B cell (primary cell): ENCODE measurements at regions of chr5 and their contacts with region 1.

Region 1: DNA sequence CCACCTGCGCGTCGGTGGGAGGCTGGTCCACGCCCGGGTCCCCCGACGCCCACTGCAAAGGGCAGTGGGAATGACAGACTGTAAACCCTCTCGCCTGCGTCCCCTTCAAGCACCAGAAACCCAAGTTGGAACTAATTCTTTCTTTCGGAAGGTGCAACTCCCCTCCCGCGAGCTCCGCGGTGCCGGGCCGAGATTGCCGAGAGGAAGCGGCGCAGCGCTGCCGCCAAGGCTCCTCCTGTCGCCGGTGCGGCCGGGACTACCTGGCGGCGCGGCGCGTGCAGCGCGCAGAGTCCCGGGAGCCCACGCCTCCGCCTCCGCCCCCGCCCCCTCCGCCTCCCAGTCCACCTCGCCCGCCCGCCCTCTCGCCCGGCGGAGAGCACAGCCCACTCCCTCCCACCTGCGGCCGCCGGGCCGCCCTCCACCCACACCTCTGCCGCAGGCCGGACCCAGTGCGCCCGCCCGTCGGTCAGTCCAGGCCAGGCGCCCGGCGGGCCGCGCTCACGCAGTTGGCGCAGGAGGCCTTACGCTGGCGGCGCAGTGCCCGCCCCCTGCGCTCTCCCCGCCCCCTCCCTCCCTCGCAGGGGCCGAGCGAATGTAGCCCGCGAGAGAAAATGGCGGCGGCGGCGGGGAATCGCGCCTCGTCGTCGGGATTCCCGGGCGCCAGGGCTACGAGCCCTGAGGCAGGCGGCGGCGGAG is at the start of gene MAP3K1:
- DNase-seq: peak; percentile 93
- ATAC-seq: peak; percentile 65
- H3K4me3 ChIP-seq: peak within 1 kb of the TSS; percentile 73 to 97 (median 87)
- H3K4me3 Mint-ChIP-seq: peak within 1 kb of the TSS; percentile 97
- H3K27ac ChIP-seq: peak within 1 kb of the TSS; percentile 91 to 94
- H3K27ac Mint-ChIP-seq: peak within 1 kb of the TSS; percentile 99
- H3K4me1 ChIP-seq: peaks cover 25 to 29% of the 10 kb centered on the region in 2 donors
- H3K4me1 Mint-ChIP-seq: peaks cover 44% of the 10 kb centered on the region
- H3K27me3 ChIP-seq: no peaks in the 10 kb centered on the region
- H3K27me3 Mint-ChIP-seq: no peaks in the 10 kb centered on the region
- CTCF ChIP-seq: no peak
- total RNA-seq, gene MAP3K1: 160 and 164 TPM in 2 replicates

Region 2: GRCh38 chr5:56565644-56566043 is 249.5 kb before region 1 on chr5:
- CTCF ChIA-PET with region 1: interaction called, 4 read pairs
- POLR2A ChIA-PET with region 1: no interaction called
- intact Hi-C with region 1: loop called (anchors 2 kb)
- DNase-seq: peak; percentile 82
- ATAC-seq: peak; percentile 97
- H3K4me3 ChIP-seq: peak overlapping the region in 3 of 5 experiments; percentile 6 to 20 (median 9)
- H3K4me3 Mint-ChIP-seq: peak overlapping the region; percentile 56
- H3K27ac ChIP-seq: no peak overlapping the region
- H3K27ac Mint-ChIP-seq: peak overlapping the region; percentile 69
- H3K4me1 ChIP-seq: peaks cover 34 to 35% of the 10 kb centered on the region in 2 donors
- H3K4me1 Mint-ChIP-seq: peaks cover 41% of the 10 kb centered on the region
- H3K27me3 ChIP-seq: no peaks in the 10 kb centered on the region
- H3K27me3 Mint-ChIP-seq: no peaks in the 10 kb centered on the region
- CTCF ChIP-seq: no peak

Region 3: GRCh38 chr5:56588636-56589480 is 226.3 kb before region 1 on chr5:
- CTCF ChIA-PET with region 1: interaction called, 6 read pairs
- POLR2A ChIA-PET with region 1: interaction called, 7 read pairs
- intact Hi-C with region 1: loop called (anchors 1 kb)
- DNase-seq: peak; percentile 98
- ATAC-seq: peak; percentile 85
- H3K4me3 ChIP-seq: peak overlapping the region in 3 of 5 experiments; percentile 22 to 41 (median 25)
- H3K4me3 Mint-ChIP-seq: peak overlapping the region; percentile 59
- H3K27ac ChIP-seq: peak overlapping the region; percentile 99 to 100
- H3K27ac Mint-ChIP-seq: peak overlapping the region; percentile 96
- H3K4me1 ChIP-seq: peaks cover 63 to 67% of the 10 kb centered on the region in 2 donors
- H3K4me1 Mint-ChIP-seq: peaks cover 77% of the 10 kb centered on the region
- H3K27me3 ChIP-seq: no peaks in the 10 kb centered on the region
- H3K27me3 Mint-ChIP-seq: no peaks in the 10 kb centered on the region
- CTCF ChIP-seq: no peak

Region 4: GRCh38 chr5:56670118-56670483 is 145.0 kb before region 1 on chr5:
- CTCF ChIA-PET with region 1: interaction called, 21 read pairs
- POLR2A ChIA-PET with region 1: interaction called, 29 read pairs
- intact Hi-C with region 1: loop called (anchors 1 kb)
- DNase-seq: peak; percentile 95
- ATAC-seq: no peak
- H3K4me3 ChIP-seq: no peak overlapping the region
- H3K4me3 Mint-ChIP-seq: peak overlapping the region; percentile 75
- H3K27ac ChIP-seq: peak overlapping the region; percentile 97 to 98
- H3K27ac Mint-ChIP-seq: peak overlapping the region; percentile 97
- H3K4me1 ChIP-seq: peaks cover 58% of the 10 kb centered on the region in 2 donors
- H3K4me1 Mint-ChIP-seq: peaks cover 74% of the 10 kb centered on the region
- H3K27me3 ChIP-seq: no peaks in the 10 kb centered on the region
- H3K27me3 Mint-ChIP-seq: no peaks in the 10 kb centered on the region
- CTCF ChIP-seq: no peak

Region 5: GRCh38 chr5:56737002-56737621 is 78.0 kb before region 1 on chr5:
- CTCF ChIA-PET with region 1: interaction called, 4 read pairs
- POLR2A ChIA-PET with region 1: no interaction called
- intact Hi-C with region 1: loop called (anchors 2 kb)
- DNase-seq: peak; percentile 34
- ATAC-seq: peak; percentile 18
- H3K4me3 ChIP-seq: peak overlapping the region in 1 of 5 experiments; percentile 48
- H3K4me3 Mint-ChIP-seq: peak overlapping the region; percentile 73
- H3K27ac ChIP-seq: peak overlapping the region; percentile 79 to 91
- H3K27ac Mint-ChIP-seq: peak overlapping the region; percentile 87
- H3K4me1 ChIP-seq: peaks cover 63% of the 10 kb centered on the region in 2 donors
- H3K4me1 Mint-ChIP-seq: peaks cover 63% of the 10 kb centered on the region
- H3K27me3 ChIP-seq: no peaks in the 10 kb centered on the region
- H3K27me3 Mint-ChIP-seq: no peaks in the 10 kb centered on the region
- CTCF ChIP-seq: no peak

Region 6: GRCh38 chr5:56763711-56764466 is 51.2 kb before region 1 on chr5:
- CTCF ChIA-PET with region 1: interaction called, 5 read pairs
- POLR2A ChIA-PET with region 1: no interaction called
- intact Hi-C with region 1: loop called (anchors 2 kb)
- DNase-seq: peak; percentile 66
- ATAC-seq: peak; percentile 87
- H3K4me3 ChIP-seq: peak overlapping the region in 1 of 5 experiments; percentile 0
- H3K4me3 Mint-ChIP-seq: peak overlapping the region; percentile 52
- H3K27ac ChIP-seq: peak overlapping the region; percentile 56 to 60
- H3K27ac Mint-ChIP-seq: peak overlapping the region; percentile 61
- H3K4me1 ChIP-seq: peaks cover 63 to 69% of the 10 kb centered on the region in 2 donors
- H3K4me1 Mint-ChIP-seq: peaks cover 70% of the 10 kb centered on the region
- H3K27me3 ChIP-seq: no peaks in the 10 kb centered on the region
- H3K27me3 Mint-ChIP-seq: no peaks in the 10 kb centered on the region
- CTCF ChIP-seq: no peak

Region 7: GRCh38 chr5:56827049-56827448 is 11.9 kb after region 1 on chr5:
- CTCF ChIA-PET with region 1: interaction called, 5 read pairs
- POLR2A ChIA-PET with region 1: no interaction called
- intact Hi-C with region 1: loop called (anchors 1 kb)
- DNase-seq: peak; percentile 51
- ATAC-seq: no peak
- H3K4me3 ChIP-seq: no peak overlapping the region
- H3K4me3 Mint-ChIP-seq: peak overlapping the region; percentile 63
- H3K27ac ChIP-seq: peak overlapping the region; percentile 15 to 85
- H3K27ac Mint-ChIP-seq: peak overlapping the region; percentile 82
- H3K4me1 ChIP-seq: peaks cover 83 to 96% of the 10 kb centered on the region in 2 donors
- H3K4me1 Mint-ChIP-seq: peaks cover 89% of the 10 kb centered on the region
- H3K27me3 ChIP-seq: no peaks in the 10 kb centered on the region
- H3K27me3 Mint-ChIP-seq: no peaks in the 10 kb centered on the region
- CTCF ChIP-seq: peak; percentile 44

Region 8: GRCh38 chr5:58172946-58173345 is 1357.8 kb after region 1 on chr5:
- CTCF ChIA-PET with region 1: no interaction called
- POLR2A ChIA-PET with region 1: no interaction called
- intact Hi-C with region 1: no loop called
- DNase-seq: no peak
- ATAC-seq: no peak
- H3K4me3 ChIP-seq: no peak overlapping the region
- H3K4me3 Mint-ChIP-seq: no peak overlapping the region
- H3K27ac ChIP-seq: no peak overlapping the region
- H3K27ac Mint-ChIP-seq: no peak overlapping the region
- H3K4me1 ChIP-seq: no peaks in the 10 kb centered on the region
- H3K4me1 Mint-ChIP-seq: no peaks in the 10 kb centered on the region
- H3K27me3 ChIP-seq: no peaks in the 10 kb centered on the region
- H3K27me3 Mint-ChIP-seq: no peaks in the 10 kb centered on the region
- CTCF ChIP-seq: no peak